Stomach (tissue), 19 donors: ENCODE measurements at regions of chr11 and their contacts with region 1.

Region 1: GRCh38 chr11:65425105-65425970 is 2.7 kb downstream of the NEAT1 start:
- DNase-seq: peak; percentile 60 to 88
- H3K4me3 ChIP-seq: peak overlapping the region; percentile 81 to 92 (median 86)
- H3K27ac ChIP-seq: peak overlapping the region; percentile 98 to 100 (median 99)
- H3K4me1 ChIP-seq: peaks cover 37 to 57% (median 42%) of the 10 kb centered on the region in 4 donors
- H3K27me3 ChIP-seq: no peaks in the 10 kb centered on the region
- CTCF ChIP-seq: peak in 1 of 7 experiments; percentile 6
- EP300 ChIP-seq: no peak
- POLR2A ChIP-seq: peak in 2 of 4 donors; percentile 63 to 83

Region 2: DNA sequence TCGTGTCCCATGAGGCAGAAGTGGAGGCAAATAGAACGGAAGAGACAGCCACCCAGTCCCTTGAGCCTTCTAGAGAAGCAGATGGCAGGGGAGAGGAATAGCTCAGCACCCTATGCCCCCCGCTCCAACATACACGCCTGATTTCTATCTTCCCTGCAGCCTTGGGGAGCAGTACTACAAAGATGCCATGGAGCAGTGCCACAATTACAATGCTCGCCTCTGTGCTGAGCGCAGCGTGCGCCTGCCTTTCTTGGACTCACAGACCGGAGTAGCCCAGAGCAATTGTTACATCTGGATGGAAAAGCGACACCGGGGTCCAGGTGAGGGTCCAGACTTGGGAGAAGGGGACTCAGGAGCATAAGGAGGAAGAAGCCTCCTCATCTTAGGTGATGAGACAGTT is 85.1 kb before region 1 on chr11:
- intact Hi-C with region 1: no loop called
- DNase-seq: no peak
- H3K4me3 ChIP-seq: no peak overlapping the region
- H3K27ac ChIP-seq: no peak overlapping the region
- H3K4me1 ChIP-seq: peaks cover 3 to 45% (median 23%) of the 10 kb centered on the region in 4 donors
- H3K27me3 ChIP-seq: no peaks in the 10 kb centered on the region
- CTCF ChIP-seq: no peak
- EP300 ChIP-seq: no peak
- POLR2A ChIP-seq: no peak

Region 3: GRCh38 chr11:65500387-65501185 is 75.2 kb after region 1 on chr11:
- intact Hi-C with region 1: loop called (anchors 5 kb)
- DNase-seq: peak in 1 of 2 donors; percentile 72
- H3K4me3 ChIP-seq: peak overlapping the region; percentile 77 to 95 (median 84)
- H3K27ac ChIP-seq: peak overlapping the region; percentile 92 to 99 (median 99)
- H3K4me1 ChIP-seq: peaks cover 26 to 39% (median 35%) of the 10 kb centered on the region in 4 donors
- H3K27me3 ChIP-seq: no peaks in the 10 kb centered on the region
- CTCF ChIP-seq: no peak
- EP300 ChIP-seq: no peak
- POLR2A ChIP-seq: peak in 2 of 4 donors; percentile 46 to 54